Right cardiac atrium (tissue), 5 donors: ENCODE measurements at regions of chr12 and their contacts with region 1.

Region 1: DNA sequence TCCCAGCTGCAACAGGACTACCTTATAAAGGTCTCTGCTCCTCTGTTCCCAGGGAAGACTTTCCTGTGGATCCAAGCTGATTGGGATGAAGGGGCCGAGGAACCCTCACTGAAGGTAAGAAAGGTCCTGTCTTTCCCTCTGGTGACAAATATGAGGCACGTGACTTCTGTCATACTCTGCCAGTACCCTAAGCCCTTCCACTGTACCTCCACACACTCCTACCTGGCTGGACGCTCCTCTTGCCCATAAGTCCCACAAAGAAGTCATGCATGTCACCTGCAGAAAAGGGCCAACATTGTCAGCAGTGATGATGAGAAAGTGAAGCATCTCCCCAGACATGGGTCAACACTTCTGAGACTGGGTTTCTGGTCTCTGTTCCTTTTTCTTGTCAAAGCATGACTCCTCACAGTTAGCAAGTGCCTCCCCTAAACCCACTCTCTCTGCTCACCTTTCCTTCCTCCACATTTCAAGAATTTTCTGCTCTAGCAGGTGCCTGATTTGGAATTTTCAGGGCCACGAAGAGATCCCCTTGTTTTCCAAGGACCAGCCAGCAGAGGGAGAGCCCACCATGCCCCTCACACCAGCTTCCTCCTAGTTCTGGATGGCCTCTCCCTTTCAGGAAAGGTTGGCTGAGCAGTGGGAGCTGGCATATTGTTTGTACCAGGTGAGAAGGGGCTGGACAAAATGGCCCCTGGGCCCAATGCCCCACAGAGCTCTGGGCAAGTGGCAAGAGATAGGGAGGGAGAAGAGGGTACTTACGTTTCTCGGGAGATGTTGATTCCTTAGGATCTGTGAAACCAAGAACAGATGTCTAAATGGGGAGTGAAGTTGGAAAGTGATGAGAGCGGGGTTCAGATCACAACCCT is 3.5 kb downstream of the TAC3 start:
- DNase-seq: no peak
- ATAC-seq: no peak
- H3K4me3 ChIP-seq: no peak overlapping the region
- H3K27ac ChIP-seq: no peak overlapping the region
- H3K4me1 ChIP-seq: no peaks in the 10 kb centered on the region
- H3K27me3 ChIP-seq: no peaks in the 10 kb centered on the region

Region 2: DNA sequence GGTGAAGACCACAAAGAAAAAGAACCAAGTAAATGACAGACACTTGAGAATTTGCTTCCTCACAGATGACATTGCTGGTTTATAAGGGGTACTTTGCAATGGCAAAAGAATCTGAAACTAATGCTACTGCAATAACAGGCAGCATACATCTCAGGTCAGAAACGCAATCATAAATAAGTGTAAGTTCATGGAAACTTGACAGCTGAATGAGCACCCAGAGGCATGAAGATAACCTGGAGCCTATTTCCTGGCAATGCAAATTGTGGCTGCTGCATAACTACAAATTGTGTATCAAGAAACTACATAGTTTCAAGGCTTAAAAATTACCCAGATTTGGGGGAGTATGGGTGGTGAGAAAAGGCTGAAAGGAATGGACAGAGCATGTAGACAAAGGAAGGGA is 45.6 kb after region 1 on chr12:
- intact Hi-C with region 1: loop called in 2 of 4 experiments (anchors 5 kb)
- DNase-seq: no peak
- ATAC-seq: no peak
- H3K4me3 ChIP-seq: no peak overlapping the region
- H3K27ac ChIP-seq: no peak overlapping the region
- H3K4me1 ChIP-seq: no peaks in the 10 kb centered on the region
- H3K27me3 ChIP-seq: no peaks in the 10 kb centered on the region

Region 3: GRCh38 chr12:57088459-57089248 is 75.8 kb after region 1 on chr12 and contains the start of gene NAB2:
- intact Hi-C with region 1: no loop called
- DNase-seq: peak; percentile 97 to 99 (median 99)
- ATAC-seq: peak; percentile 78 to 85
- H3K4me3 ChIP-seq: peak within 1 kb of the TSS; percentile 78
- H3K27ac ChIP-seq: peak within 1 kb of the TSS; percentile 100
- H3K4me1 ChIP-seq: peaks cover 4% of the 10 kb centered on the region
- H3K27me3 ChIP-seq: no peaks in the 10 kb centered on the region
- total RNA-seq, gene NAB2: 12.8 to 22.7 (median 14.7) TPM